Right ventricle myocardium superior (tissue), 1 donor: ENCODE measurements at regions of chr17 and their contacts with region 1.

Region 1: GRCh38 chr17:1573916-1574696 is 11.5 kb upstream of the PITPNA start:
- DNase-seq: peak; percentile 94
- ATAC-seq: peak; percentile 72

Region 2: DNA sequence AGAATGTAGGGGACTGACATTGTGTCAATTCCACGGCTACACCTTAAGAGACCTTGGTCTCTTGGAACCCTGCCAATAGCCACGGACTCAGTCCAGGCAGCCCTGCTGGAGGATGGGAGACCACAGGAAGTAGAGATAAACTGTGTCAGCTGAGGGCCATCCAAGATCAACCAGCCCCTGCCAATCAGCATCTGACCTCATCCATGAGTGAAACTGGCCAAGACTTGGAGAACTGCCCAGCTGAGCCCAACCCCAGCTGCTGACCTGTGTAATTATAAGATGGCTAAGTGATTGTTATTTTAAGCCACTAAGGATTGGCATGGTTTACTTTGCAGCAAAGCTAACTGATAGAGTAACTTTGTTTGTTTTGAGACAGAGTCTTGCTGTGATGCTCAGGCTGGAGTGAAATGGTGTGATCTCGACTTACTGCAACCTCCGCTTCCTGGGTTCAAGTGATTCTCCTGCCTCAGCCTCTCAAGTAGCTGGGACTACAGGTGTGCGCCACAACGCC is 160.8 kb before region 1 on chr17:
- intact Hi-C with region 1: no loop called
- DNase-seq: peak; percentile 82
- ATAC-seq: peak; percentile 89

Region 3: DNA sequence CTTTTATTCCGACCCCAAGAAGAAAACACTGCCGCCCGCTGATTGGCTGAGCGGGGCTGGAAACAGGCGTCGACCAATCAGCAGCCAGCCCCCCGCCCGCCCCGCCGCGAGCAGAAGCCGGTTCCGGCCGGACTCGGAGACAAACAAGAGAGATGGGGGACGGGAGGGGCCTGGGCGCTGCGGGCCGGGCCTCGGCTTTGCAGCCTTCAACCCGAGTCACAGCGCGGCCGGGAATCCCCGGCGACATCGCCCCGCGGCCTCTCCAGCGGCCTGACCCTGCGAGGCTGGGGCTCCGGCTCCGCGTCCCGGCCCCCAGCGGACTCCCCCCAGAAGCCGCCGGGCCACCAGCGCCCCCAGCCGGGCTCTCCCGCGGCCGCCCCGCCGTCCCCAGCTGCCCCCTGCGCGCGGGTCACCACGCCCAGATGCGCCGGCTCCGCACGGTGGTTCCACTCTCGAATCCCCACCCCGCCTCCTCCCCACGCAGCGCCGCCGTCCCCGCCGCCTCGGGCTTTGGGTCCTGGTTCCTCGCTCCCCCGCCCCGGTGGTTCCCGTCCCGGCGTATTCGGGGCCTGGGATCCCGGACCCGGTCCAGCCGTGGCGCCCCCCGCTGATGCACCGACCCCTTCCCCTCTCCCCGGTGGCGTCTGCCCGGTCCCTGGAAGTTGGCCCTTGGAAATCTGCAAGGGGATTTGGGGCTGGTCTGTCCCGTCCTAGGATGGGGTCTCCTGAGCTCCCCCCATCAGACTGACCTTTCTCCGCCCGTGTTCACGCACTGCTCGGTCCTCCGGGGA is 54.9 kb after region 1 on chr17:
- intact Hi-C with region 1: loop called (anchors 1 kb)
- DNase-seq: peak; percentile 96
- ATAC-seq: peak; percentile 91

Region 4: DNA sequence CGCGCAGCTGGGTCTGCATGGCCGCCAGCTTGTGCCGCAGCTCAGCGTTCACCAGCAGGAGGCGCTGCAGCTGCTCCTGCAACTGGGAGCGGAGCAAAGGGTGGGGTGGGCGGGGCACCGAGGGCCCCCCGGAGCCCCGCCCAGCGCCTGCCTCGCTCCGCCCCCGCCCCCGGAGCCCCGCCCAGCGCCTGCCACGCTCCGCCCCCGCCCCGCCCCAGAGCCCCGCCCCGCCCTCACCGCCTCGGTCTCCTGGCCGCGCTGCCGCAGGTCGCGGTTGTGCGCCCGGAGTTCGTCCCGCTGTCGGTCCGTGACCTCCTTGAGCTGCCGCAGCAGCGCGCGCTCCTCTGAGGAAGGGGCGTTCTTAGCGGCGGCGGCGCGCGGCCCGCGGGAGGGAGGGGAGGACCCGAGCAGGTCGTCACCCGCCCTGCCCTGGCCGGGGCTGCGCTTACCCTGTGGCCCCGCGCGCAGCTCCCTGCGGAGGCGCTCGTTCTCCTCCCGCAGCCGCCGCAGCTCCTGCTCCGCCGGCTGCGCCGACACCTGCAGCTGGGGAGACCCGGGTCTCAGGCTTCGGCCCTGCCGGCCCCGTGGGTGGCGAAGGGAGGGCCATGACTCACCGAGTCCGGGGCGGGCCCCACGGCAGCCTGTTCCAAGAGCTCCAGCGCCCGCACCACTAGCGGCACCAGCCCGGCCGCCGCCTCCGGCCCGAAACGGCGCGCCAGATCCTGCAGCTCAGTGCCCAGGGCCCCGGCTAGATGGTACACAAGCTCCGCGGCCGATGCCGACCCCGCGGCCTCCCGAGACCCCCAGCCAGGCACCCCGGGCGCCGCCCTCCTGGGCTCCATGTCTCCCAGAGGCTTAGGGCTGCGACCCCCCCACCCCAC is 75.1 kb after region 1 on chr17:
- intact Hi-C with region 1: loop called (anchors 5 kb)
- DNase-seq: peak; percentile 98
- ATAC-seq: peak; percentile 64